Activated T-helper 1 cell treated with anti-CD3 and anti-CD28 coated beads, Interleukin-12 subunit alpha, Interleukin-12 subunit beta, Interleukin-2, Interleukin-4 antibody, amounts not matched to agents 30 ng/mL and 10 ng/mL and 1 ng/mL, durations not matched to agents 14 hours and 24 hours and 36 hours (primary cell): ENCODE measurements at regions of chr11 and their contacts with region 1.

Region 1: DNA sequence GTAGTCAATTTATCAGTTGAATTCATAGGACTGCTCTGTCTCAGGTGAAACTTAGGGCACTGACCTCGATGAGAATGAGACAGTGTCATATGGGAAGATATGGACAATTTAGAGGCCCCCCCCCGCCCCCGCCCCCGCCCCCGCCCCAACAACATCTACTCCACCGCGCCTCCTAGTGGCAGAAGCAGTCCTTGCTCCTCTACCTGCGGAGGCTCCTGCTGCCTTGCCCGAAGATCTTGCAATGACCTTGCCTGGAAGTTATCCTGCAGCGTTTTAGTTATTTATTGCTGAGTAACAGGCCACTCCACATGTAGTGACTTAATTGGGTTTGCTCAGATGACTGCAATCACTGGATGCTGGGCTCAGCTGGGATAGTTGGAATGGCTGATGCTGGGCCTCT is 15.2 kb downstream of the SERPINH1 start:
- DNase-seq: no peak
- H3K4me3 Mint-ChIP-seq: no peak overlapping the region
- H3K27ac Mint-ChIP-seq: no peak overlapping the region
- H3K4me1 Mint-ChIP-seq: peaks cover 1% of the 10 kb centered on the region
- H3K27me3 Mint-ChIP-seq: peaks cover 13% of the 10 kb centered on the region

Region 2: GRCh38 chr11:75547580-75548058 is 29.6 kb before region 1 on chr11:
- intact Hi-C with region 1: loop called (anchors 1 kb)
- DNase-seq: no peak
- H3K4me3 Mint-ChIP-seq: no peak overlapping the region
- H3K27ac Mint-ChIP-seq: no peak overlapping the region
- H3K4me1 Mint-ChIP-seq: no peaks in the 10 kb centered on the region
- H3K27me3 Mint-ChIP-seq: peaks cover 15% of the 10 kb centered on the region